ENCODE measurements at regions of chr2 and their contacts with region 1.

Region 1: GRCh38 chr2:176500901-176501300 is 231.7 kb downstream of the MTX2 start:
- DNase-seq: no peak
- H3K4me3 ChIP-seq: no peak overlapping the region
- H3K27ac ChIP-seq: no peak overlapping the region
- H3K4me1 ChIP-seq: no peaks in the 10 kb centered on the region
- H3K27me3 ChIP-seq: no peaks in the 10 kb centered on the region
- CTCF ChIP-seq: no peak

Region 2: GRCh38 chr2:176536439-176537133 is 35.7 kb after region 1 on chr2:
- CTCF ChIA-PET with region 1: interaction called, 24 read pairs
- dilution Hi-C with region 1: no loop called
- in situ Hi-C with region 1: no loop called
- intact Hi-C with region 1: no loop called
- DNase-seq: peak; percentile 63
- H3K4me3 ChIP-seq: no peak overlapping the region
- H3K27ac ChIP-seq: no peak overlapping the region
- H3K4me1 ChIP-seq: peaks cover 4% of the 10 kb centered on the region
- H3K27me3 ChIP-seq: no peaks in the 10 kb centered on the region
- CTCF ChIP-seq: no peak

Measured in mammary epithelial cell (primary cell).